Activated T-helper 1 cell treated with anti-CD3 and anti-CD28 coated beads, Interleukin-12 subunit alpha, Interleukin-12 subunit beta, Interleukin-2, Interleukin-4 antibody, amounts not matched to agents 30 ng/mL and 10 ng/mL and 1 ng/mL, durations not matched to agents 14 hours and 24 hours and 36 hours (primary cell): ENCODE measurements at regions of chrX and their contacts with region 1.

Region 1: GRCh38 chrX:14798805-14799397 is 74.0 kb downstream of the FANCB start:
- DNase-seq: no peak
- H3K4me3 Mint-ChIP-seq: no peak overlapping the region
- H3K27ac Mint-ChIP-seq: peak overlapping the region; percentile 42
- H3K4me1 Mint-ChIP-seq: peaks cover 8% of the 10 kb centered on the region
- H3K27me3 Mint-ChIP-seq: no peaks in the 10 kb centered on the region

Region 2: DNA sequence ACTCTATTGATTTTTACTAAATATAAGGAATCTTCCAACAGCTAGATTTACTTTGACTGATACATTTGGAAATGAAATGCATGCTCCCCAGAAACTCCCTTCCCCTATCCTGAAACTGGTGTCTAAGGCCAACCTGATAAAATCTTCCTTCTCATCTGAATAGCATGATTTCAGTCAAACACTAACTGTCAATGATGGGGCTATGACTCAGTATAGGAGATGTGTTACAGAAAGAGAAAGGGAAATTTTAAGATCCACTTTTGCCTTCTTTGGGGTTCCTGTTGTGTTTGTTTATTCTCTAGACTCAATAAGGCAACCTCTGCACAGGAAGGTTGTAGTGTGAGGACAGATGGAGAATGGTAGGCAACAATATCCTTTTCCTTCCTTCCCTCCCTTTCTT is 235.0 kb after region 1 on chrX:
- intact Hi-C with region 1: loop called (anchors 5 kb)
- DNase-seq: no peak
- H3K4me3 Mint-ChIP-seq: no peak overlapping the region
- H3K27ac Mint-ChIP-seq: peak overlapping the region; percentile 36
- H3K4me1 Mint-ChIP-seq: peaks cover 14% of the 10 kb centered on the region
- H3K27me3 Mint-ChIP-seq: no peaks in the 10 kb centered on the region

Region 3: DNA sequence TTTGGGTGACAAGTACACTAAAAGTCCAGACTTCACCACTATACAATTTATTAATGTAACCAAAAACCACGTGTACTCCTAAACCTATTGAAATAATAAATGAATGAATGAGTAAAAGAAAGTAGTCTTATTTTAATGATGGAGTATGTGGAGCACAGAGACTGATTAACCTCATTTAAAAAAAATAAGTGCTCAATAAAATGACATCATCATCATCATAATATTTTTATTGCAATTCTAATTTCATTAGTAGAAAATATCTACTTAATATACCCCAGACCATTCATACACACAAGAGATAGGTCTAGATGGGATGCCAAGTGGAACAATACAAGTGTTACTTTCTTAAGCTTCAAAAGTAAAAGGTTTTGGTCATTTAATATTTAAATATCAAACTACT is 337.9 kb after region 1 on chrX:
- intact Hi-C with region 1: no loop called
- DNase-seq: no peak
- H3K4me3 Mint-ChIP-seq: no peak overlapping the region
- H3K27ac Mint-ChIP-seq: no peak overlapping the region
- H3K4me1 Mint-ChIP-seq: peaks cover under 1% of the 10 kb centered on the region
- H3K27me3 Mint-ChIP-seq: no peaks in the 10 kb centered on the region